ACHN (cell line): ENCODE measurements at regions of chr16 and their contacts with region 1.

Region 1: DNA sequence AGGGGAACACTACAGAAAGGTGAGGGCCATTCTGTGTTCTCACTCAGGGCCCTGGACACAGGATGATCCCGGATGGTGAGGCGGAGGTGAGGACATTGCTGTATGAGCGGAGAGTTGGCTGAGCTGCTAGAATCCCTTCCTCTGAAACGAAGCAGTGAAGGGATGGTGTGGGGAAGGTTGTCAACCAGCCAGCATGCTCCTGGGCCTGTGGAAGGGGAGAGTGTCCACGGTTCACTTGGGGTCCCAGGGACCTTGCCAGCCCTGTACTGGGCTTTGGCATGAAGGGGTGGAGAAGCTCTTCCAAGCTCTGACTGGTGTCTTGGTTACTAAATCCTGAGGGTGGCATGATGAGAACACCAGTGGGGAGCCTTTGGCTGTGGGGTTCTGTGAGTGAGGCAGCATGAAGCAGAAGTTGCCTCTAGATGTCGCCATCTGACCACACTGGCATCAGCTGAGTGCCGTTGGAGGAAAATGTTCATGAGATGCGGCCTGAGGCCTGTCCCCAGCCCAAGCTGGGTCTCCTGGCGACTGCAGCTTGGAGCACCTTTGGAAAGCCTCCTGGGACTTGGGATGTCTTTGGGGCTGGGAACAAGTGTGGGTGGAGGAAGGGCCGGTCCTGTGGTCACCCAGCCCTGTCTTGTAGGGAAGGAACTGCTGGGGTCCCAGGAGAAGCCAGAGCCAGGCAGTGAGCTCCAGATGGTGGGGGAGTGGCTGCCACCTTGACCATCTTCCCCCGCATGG is 14.8 kb downstream of the PDP2 start:
- DNase-seq: peak; percentile 85

Region 2: GRCh38 chr16:66830422-66831404 is 64.4 kb before region 1 on chr16 and contains the start of gene NAE1:
- in situ Hi-C with region 1: no loop called
- DNase-seq: peak; percentile 93

Region 3: DNA sequence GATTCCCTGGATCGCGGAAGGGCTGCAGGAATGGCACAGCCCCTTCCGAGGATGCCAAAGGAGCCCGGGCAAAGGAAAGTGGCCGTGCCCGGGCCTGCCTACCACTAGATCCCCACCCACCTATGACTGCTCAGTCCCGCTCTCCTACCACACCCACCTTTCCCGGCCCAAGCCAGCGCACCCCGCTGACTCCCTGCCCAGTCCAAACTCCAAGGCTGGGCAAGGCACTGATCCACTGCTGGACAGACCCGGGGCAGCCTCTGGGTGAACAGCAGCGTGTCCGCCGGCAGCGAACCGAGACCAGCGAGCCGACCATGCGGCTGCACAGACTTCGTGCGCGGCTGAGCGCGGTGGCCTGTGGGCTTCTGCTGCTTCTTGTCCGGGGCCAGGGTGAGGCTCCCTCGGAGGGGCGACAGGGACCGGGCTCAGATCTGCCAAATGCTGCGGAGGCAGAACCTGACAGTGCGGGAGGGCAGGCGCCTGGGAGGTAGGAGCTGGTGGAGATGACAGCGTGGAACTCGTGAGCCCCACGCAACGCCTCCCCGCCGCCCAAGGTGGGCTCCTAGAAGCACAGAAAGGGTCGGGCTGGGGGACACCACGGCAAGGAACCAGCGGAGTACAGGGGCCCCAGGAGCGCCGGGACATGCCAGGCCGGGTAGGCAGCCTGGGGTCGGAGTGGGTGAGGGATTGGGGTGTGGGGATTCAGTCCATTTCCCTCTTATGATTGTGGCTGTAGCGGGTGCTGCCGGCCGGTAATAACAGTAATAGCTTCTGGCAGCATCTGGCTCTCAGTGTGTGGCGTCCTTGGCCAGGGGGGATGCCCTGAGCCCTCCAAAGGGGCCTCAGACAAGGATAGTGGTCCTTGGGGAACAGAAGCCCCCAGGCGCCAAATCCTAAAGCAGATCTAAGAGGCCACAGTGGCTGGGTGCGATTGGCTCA is 40.5 kb after region 1 on chr16 and contains the start of gene CES2:
- in situ Hi-C with region 1: loop called (anchors 5 kb)
- DNase-seq: peak; percentile 88